Activated T-helper 1 cell treated with anti-CD3 and anti-CD28 coated beads, Interleukin-12 subunit alpha, Interleukin-12 subunit beta, Interleukin-2, Interleukin-4 antibody, amounts not matched to agents 30 ng/mL and 10 ng/mL and 1 ng/mL, durations not matched to agents 14 hours and 24 hours and 36 hours (primary cell): ENCODE measurements at regions of chr11 and their contacts with region 1.

Region 1: DNA sequence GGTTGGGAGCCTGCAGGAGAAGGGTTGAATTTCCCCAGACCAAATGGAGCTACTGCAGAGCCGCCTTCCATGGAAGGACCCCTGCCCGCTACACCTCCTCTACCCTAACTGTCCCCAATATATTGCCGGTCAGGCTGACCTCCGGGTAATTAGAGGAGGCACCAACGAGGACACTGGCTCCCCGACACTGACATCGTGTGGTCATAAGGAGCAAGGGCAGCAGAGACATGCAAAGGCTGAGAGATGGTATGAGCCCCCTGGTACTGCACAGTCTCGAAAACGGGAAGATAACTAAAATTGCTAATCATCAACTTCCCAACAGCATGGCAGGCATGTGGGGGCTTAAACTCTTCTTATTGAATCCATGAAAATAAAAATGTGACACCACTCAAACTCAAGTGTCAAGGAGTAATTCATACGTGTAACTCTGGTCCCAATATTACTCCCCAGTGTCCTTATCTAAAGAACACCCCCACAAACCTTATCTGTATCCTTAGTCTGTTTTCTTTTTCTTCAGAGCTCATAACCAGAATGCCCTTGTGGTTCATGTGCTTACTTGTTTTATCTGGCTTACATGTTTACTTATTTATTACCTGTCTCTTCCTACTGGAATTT is 4.4 kb downstream of the CAVIN3 start:
- DNase-seq: no peak
- H3K4me3 Mint-ChIP-seq: no peak overlapping the region
- H3K27ac Mint-ChIP-seq: no peak overlapping the region
- H3K4me1 Mint-ChIP-seq: peaks cover 11% of the 10 kb centered on the region
- H3K27me3 Mint-ChIP-seq: peaks cover 49% of the 10 kb centered on the region

Region 2: GRCh38 chr11:5684646-5685362 is 631.1 kb before region 1 on chr11 and contains the start of gene TRIM5:
- intact Hi-C with region 1: loop called (anchors 5 kb)
- DNase-seq: peak; percentile 74
- H3K4me3 Mint-ChIP-seq: peak within 1 kb of the TSS; percentile 89
- H3K27ac Mint-ChIP-seq: peak within 1 kb of the TSS; percentile 96
- H3K4me1 Mint-ChIP-seq: peaks cover 57% of the 10 kb centered on the region
- H3K27me3 Mint-ChIP-seq: no peaks in the 10 kb centered on the region
- total RNA-seq, gene TRIM5: 7.9 and 8.6 TPM in 2 replicates

Region 3: DNA sequence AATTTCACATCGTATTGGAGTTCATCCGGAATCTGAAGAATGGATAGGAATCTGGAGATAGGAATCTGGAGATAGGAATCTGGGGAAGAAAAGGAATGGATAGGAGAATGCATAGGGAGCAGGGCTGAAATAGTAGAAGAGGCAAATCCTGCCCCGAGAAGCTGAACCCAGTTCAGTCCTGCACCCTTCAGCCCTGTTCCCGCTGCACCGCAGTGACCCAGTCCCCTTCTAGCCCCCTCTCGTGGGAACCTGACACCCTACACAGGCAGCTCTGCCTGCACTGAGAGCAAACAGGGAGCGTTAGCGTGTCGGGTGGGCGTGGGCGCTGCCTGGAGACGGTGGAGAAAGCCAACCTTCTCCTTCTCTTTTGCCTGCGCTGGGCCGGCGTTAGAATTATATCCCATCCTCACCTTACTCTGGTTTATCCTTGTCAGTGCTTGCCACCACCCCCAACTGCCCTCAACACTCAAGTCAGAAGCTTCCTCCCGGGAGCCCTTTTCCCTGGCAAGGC is 57.3 kb before region 1 on chr11:
- intact Hi-C with region 1: loop called (anchors 2 kb)
- DNase-seq: no peak
- H3K4me3 Mint-ChIP-seq: no peak overlapping the region
- H3K27ac Mint-ChIP-seq: no peak overlapping the region
- H3K4me1 Mint-ChIP-seq: no peaks in the 10 kb centered on the region
- H3K27me3 Mint-ChIP-seq: peaks cover 12% of the 10 kb centered on the region

Region 4: GRCh38 chr11:6353367-6353987 is 37.6 kb after region 1 on chr11:
- intact Hi-C with region 1: loop called (anchors 1 kb)
- DNase-seq: peak; percentile 47
- H3K4me3 Mint-ChIP-seq: no peak overlapping the region
- H3K27ac Mint-ChIP-seq: no peak overlapping the region
- H3K4me1 Mint-ChIP-seq: peaks cover 12% of the 10 kb centered on the region
- H3K27me3 Mint-ChIP-seq: no peaks in the 10 kb centered on the region

Region 5: GRCh38 chr11:6419009-6419631 is 103.2 kb after region 1 on chr11 and contains the start of gene APBB1:
- intact Hi-C with region 1: loop called (anchors 2 kb)
- DNase-seq: peak; percentile 63
- H3K4me3 Mint-ChIP-seq: peak within 1 kb of the TSS; percentile 77
- H3K27ac Mint-ChIP-seq: no peak within 1 kb of the TSS
- H3K4me1 Mint-ChIP-seq: no peaks in the 10 kb centered on the region
- H3K27me3 Mint-ChIP-seq: peaks cover 32% of the 10 kb centered on the region
- total RNA-seq, gene APBB1: 16.5 and 16.8 TPM in 2 replicates

Region 6: DNA sequence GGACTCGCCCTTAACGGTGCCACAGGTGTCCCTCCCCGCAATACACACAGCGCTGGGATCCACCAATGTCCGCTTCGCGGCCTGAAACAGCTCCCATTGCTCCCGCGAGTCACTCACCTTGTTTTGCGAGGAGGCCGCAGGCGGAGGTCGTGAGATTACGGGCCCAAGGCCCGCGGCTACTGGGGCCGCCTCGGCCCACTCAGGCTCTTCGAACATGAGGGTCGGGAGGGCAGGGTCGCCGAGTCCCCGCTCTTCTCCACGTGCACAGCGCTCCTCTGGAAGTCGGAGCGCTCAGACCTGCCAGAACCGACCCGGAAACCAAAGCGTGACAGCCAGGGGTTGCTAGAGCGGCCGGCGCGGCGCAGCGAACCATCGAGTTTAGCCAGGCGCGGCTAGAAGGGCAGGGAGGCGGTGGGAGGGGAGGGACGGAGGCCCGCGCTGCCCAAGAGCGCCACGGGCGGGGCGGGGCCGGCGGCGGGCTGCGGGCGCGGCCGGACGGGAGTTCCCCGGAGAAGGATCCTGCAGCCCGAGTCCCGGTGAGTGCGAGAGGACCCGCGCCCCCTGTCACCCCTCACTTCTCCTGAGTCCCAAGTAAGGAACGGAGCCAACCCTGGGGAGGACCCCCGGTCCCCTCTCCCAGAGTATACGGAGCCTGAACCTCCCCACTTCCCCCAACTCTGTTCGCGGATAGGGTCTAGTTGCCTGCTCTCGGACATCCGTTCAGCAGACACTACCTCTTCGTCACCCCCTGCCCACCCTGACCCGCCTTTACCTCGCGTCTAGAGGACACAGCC is 287.6 kb after region 1 on chr11 and contains the starts of genes ILK and RRP8:
- intact Hi-C with region 1: loop called (anchors 2 kb)
- DNase-seq: peak; percentile 84
- H3K4me3 Mint-ChIP-seq: no peak within 1 kb of the TSS
- H3K27ac Mint-ChIP-seq: no peak within 1 kb of the TSS
- H3K4me1 Mint-ChIP-seq: peaks cover 26% of the 10 kb centered on the region
- H3K27me3 Mint-ChIP-seq: no peaks in the 10 kb centered on the region
- total RNA-seq, gene ILK: 90.1 and 97.5 TPM in 2 replicates
- total RNA-seq, gene RRP8: 38.8 and 40.5 TPM in 2 replicates